GM12878 (cell line): ENCODE measurements at regions of chr1 and their contacts with region 1.

Region 1: GRCh38 chr1:160550572-160551034 is 27.5 kb upstream of the SLAMF6 start:
- DNase-seq: no peak
- ATAC-seq: peak; percentile 14; the same call in 1 of the 3 replicates
- H3K4me3 ChIP-seq: no peak overlapping the region
- H3K27ac ChIP-seq: peak overlapping the region; percentile 98
- H3K4me1 ChIP-seq: peaks cover 58% of the 10 kb centered on the region
- H3K27me3 ChIP-seq: no peaks in the 10 kb centered on the region
- CTCF ChIP-seq: peak; percentile 32 to 58 (median 46); a peak in 5 of 6 replicates
- EP300 ChIP-seq: no peak
- POLR2A ChIP-seq: no peak
- RAD21 ChIP-seq: peak; percentile 79

Region 2: DNA sequence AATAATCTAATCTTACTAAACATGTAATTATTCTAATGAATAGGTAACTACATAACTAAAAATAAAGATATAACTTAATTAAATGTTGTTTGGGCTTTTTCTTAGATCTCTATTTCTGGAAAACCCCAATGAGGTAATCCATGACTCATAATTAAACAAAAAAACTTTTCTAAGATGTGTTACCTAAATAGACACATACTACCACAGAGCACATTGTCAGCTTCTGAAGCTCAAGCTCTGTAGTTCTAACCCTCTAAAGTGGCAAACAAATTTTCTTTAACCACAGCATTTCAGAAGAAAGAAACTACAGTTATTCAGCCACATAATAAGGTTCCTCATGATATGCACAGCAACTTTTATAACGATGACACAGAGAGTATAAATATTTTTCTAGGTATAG is 1834.3 kb before region 1 on chr1:
- CTCF ChIA-PET with region 1: no interaction called
- POLR2A ChIA-PET with region 1: no interaction called
- RAD21 ChIA-PET with region 1: no interaction called
- SMC1A ChIA-PET with region 1: no interaction called
- in situ Hi-C with region 1: no loop called
- intact Hi-C with region 1: no loop called
- DNase-seq: peak; percentile 8
- ATAC-seq: peak; percentile 94
- H3K4me3 ChIP-seq: no peak overlapping the region
- H3K27ac ChIP-seq: no peak overlapping the region
- H3K4me1 ChIP-seq: no peaks in the 10 kb centered on the region
- H3K27me3 ChIP-seq: no peaks in the 10 kb centered on the region
- CTCF ChIP-seq: no peak
- EP300 ChIP-seq: 0 out of 4 replicates have a peak, but pooled peaks of 1 of the 2 experiments have one; percentile 38
- POLR2A ChIP-seq: no peak
- RAD21 ChIP-seq: no peak

Region 3: GRCh38 chr1:160451119-160451858 is 99.3 kb before region 1 on chr1:
- CTCF ChIA-PET with region 1: interaction called, 4 read pairs
- POLR2A ChIA-PET with region 1: interaction called, 8 read pairs
- RAD21 ChIA-PET with region 1: interaction called, 21 read pairs
- SMC1A ChIA-PET with region 1: interaction called, 8 read pairs
- in situ Hi-C with region 1: no loop called
- intact Hi-C with region 1: loop called (anchors 5 kb)
- DNase-seq: peak; percentile 44
- ATAC-seq: peak; percentile 43
- H3K4me3 ChIP-seq: 0 out of 2 replicates have a peak overlapping the region, but pooled peaks have one; percentile 2
- H3K27ac ChIP-seq: peak overlapping the region; percentile 82
- H3K4me1 ChIP-seq: peaks cover 47% of the 10 kb centered on the region
- H3K27me3 ChIP-seq: no peaks in the 10 kb centered on the region
- CTCF ChIP-seq: no peak
- EP300 ChIP-seq: no peak
- POLR2A ChIP-seq: no peak
- RAD21 ChIP-seq: no peak

Region 4: GRCh38 chr1:160539990-160540858 is 10.4 kb before region 1 on chr1:
- CTCF ChIA-PET with region 1: interaction called, 18 read pairs
- POLR2A ChIA-PET with region 1: interaction called, 21 read pairs
- RAD21 ChIA-PET with region 1: interaction called, 45 read pairs
- SMC1A ChIA-PET with region 1: interaction called, 735 read pairs
- in situ Hi-C with region 1: no loop called
- intact Hi-C with region 1: no loop called
- DNase-seq: peak; percentile 95
- ATAC-seq: peak; percentile 95
- H3K4me3 ChIP-seq: peak overlapping the region; percentile 38; the same call in 1 of the 2 replicates
- H3K27ac ChIP-seq: peak overlapping the region; percentile 92
- H3K4me1 ChIP-seq: peaks cover 23% of the 10 kb centered on the region
- H3K27me3 ChIP-seq: no peaks in the 10 kb centered on the region
- CTCF ChIP-seq: no peak
- EP300 ChIP-seq: peak; percentile 53 to 73; a peak in 3 of 4 replicates
- POLR2A ChIP-seq: peak; percentile 66
- RAD21 ChIP-seq: 0 out of 2 replicates have a peak, but pooled peaks have one; percentile 11

Region 5: GRCh38 chr1:160575112-160575664 is 24.6 kb after region 1 on chr1:
- CTCF ChIA-PET with region 1: interaction called, 121 read pairs
- POLR2A ChIA-PET with region 1: interaction called, 76 read pairs
- RAD21 ChIA-PET with region 1: interaction called, 292 read pairs
- SMC1A ChIA-PET with region 1: interaction called, 735 read pairs
- in situ Hi-C with region 1: no loop called
- intact Hi-C with region 1: loop called (anchors 2 kb)
- DNase-seq: no peak
- ATAC-seq: peak; percentile 49
- H3K4me3 ChIP-seq: no peak overlapping the region
- H3K27ac ChIP-seq: peak overlapping the region; percentile 97
- H3K4me1 ChIP-seq: peaks cover 27% of the 10 kb centered on the region
- H3K27me3 ChIP-seq: no peaks in the 10 kb centered on the region
- CTCF ChIP-seq: no peak
- EP300 ChIP-seq: no peak
- POLR2A ChIP-seq: no peak
- RAD21 ChIP-seq: no peak

Region 6: GRCh38 chr1:160629286-160630210 is 78.9 kb after region 1 on chr1:
- CTCF ChIA-PET with region 1: interaction called, 3 read pairs
- POLR2A ChIA-PET with region 1: interaction called, 13 read pairs
- RAD21 ChIA-PET with region 1: interaction called, 14 read pairs
- SMC1A ChIA-PET with region 1: interaction called, 17 read pairs
- in situ Hi-C with region 1: no loop called
- intact Hi-C with region 1: no loop called
- DNase-seq: no peak
- ATAC-seq: no peak
- H3K4me3 ChIP-seq: peak overlapping the region; percentile 3; the same call in 1 of the 2 replicates
- H3K27ac ChIP-seq: peak overlapping the region; percentile 30
- H3K4me1 ChIP-seq: peaks cover 69% of the 10 kb centered on the region
- H3K27me3 ChIP-seq: no peaks in the 10 kb centered on the region
- CTCF ChIP-seq: no peak
- EP300 ChIP-seq: no peak
- POLR2A ChIP-seq: peak; percentile 46
- RAD21 ChIP-seq: no peak